ENCODE measurements at regions of chr6 and their contacts with region 1.

Region 1: DNA sequence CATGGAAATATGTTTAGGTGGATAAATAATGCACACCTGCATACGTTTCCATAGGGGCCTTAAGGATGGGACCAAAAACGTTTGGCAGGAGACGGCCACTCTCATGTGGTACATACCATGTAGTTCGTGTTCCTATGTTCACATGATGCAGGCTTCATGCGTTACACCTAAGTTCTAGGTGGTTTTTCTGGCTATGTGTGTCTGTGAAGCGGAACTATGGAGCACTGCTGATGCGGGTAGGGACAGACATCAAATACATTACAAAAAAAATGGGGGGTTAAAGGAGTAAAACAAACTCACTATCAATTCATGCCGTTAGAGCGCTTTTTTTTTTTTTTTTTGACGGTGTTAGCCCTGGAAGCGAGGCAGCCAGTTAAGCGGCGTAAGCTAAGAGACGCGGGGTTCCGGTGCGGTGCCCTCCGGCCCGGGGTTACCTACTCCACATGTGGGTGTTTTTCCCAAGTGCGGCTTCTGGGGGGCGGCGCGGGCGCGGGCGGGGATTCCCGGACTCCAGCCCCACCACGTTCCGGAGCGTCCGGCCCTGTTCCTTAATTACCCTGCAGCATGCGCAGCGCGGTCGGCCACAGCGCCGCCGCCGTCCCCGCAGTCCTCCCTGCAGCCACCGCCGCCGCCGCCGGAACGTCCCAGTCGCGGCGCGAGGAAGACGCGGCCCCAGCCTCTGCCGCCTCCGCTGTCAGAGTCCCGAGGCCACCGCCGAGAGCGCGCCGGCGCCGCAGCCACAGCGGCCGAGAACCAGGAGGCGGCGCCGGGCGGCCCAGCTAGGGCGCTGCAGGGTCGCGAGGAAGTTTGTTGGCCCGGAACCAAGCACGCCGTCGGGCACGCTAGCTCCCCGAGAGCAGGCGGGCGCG is 648 bp downstream of the COL19A1 start:
- DNase-seq: peak; percentile 81
- ATAC-seq: peak; percentile 74
- H3K4me3 Mint-ChIP-seq: peak overlapping the region; percentile 88
- H3K27ac Mint-ChIP-seq: peak overlapping the region; percentile 98
- H3K4me1 Mint-ChIP-seq: peaks cover 74% of the 10 kb centered on the region
- H3K27me3 Mint-ChIP-seq: no peaks in the 10 kb centered on the region
- CTCF ChIP-seq: no peak

Region 2: DNA sequence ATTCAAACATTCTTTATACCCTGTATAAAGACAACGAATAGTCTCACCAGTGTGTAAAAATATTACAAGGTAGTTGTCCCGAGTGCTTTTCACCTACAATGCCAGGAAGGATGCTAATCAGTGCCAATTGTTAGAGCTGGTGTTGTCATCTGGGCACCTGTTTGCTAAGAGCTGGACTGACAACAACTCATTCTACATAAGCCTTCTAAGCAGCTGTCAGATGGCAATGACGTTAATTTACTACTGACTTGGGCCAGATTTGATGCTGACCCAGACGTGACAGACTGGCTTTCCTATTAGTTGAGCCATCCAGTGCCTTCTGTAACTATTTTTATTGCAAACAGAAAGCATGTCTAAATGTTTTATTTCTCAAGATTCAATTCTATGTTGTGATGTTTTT is 876.7 kb before region 1 on chr6:
- CTCF ChIA-PET with region 1: no interaction called
- POLR2A ChIA-PET with region 1: no interaction called
- intact Hi-C with region 1: no loop called
- DNase-seq: no peak
- ATAC-seq: no peak
- H3K4me3 Mint-ChIP-seq: no peak overlapping the region
- H3K27ac Mint-ChIP-seq: no peak overlapping the region
- H3K4me1 Mint-ChIP-seq: no peaks in the 10 kb centered on the region
- H3K27me3 Mint-ChIP-seq: no peaks in the 10 kb centered on the region
- CTCF ChIP-seq: no peak

Region 3: DNA sequence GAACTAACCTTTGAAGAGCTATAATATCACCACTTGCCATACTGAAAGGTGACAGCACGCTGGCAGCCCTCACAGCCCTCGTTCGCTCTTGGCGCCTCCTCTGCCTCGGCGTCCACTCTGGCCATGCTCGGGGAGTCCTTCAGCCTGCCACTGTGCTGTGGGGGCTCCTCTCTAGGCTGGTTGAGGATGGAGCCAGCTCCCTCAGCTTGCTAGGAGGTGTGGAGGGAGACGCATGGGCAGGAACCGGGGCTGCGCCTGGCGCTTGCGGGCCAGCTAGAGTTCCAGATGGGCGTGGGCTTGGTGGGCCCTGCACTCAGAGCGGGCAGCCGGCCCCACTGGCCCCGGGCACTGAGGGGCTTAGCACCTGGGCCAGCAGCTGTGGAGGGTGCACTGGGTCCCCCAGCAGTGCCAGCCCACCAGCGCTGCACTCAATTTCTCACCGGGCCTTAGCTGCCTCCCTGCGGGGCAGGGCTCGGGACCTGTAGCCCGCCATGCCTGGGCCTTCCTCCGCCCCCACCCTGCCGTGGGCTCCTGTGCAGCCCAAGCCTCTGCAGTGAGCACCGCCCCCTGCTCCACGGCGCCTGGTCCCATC is 399.9 kb before region 1 on chr6:
- CTCF ChIA-PET with region 1: no interaction called
- POLR2A ChIA-PET with region 1: no interaction called
- intact Hi-C with region 1: no loop called
- DNase-seq: no peak
- ATAC-seq: no peak
- H3K4me3 Mint-ChIP-seq: no peak overlapping the region
- H3K27ac Mint-ChIP-seq: no peak overlapping the region
- H3K4me1 Mint-ChIP-seq: no peaks in the 10 kb centered on the region
- H3K27me3 Mint-ChIP-seq: no peaks in the 10 kb centered on the region
- CTCF ChIP-seq: no peak

Region 4: GRCh38 chr6:69796642-69797390 is 70.2 kb before region 1 on chr6 and contains the start of gene LMBRD1:
- CTCF ChIA-PET with region 1: interaction called, 9 read pairs
- POLR2A ChIA-PET with region 1: interaction called, 82 read pairs
- intact Hi-C with region 1: loop called (anchors 1 kb)
- DNase-seq: peak; percentile 100
- ATAC-seq: peak; percentile 81
- H3K4me3 Mint-ChIP-seq: peak within 1 kb of the TSS; percentile 95
- H3K27ac Mint-ChIP-seq: peak within 1 kb of the TSS; percentile 97
- H3K4me1 Mint-ChIP-seq: peaks cover 47% of the 10 kb centered on the region
- H3K27me3 Mint-ChIP-seq: no peaks in the 10 kb centered on the region
- CTCF ChIP-seq: peak; percentile 53
- total RNA-seq, gene LMBRD1: 46.9 and 51.3 TPM in 2 replicates

Region 5: DNA sequence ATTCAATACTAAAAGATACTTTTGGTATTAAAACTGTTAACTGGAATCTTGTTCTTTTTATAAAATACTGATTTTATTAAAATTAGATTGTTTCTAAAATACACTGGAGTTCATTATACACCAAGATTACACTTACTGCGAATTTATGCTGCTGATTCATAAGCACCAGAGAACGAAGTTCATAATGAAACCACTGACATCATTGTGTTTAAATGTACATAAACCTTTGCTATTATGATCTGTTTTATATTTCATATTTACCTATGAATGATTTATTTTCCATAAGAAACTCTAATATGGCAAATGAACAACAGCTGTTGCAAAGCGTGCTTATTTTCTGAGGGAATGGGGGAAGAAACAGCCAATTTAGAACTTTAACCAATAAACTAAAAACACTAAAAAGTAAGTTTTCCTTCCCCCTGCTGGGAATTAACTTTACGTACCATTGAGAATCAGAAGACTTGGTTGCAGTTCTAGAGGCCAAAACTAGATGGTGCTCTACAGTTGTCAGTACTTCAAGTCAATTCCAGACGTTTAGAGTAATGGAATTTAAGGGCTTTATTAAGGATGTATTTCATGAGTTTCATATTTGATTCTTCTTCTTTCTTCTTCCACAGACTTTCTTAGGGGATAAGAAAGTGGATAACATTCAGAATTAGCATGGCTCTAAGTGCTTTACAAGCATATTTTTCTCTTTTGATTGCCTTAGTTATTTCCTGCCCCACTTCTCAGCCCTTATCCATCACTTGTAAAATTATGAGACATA is 31.4 kb before region 1 on chr6:
- CTCF ChIA-PET with region 1: interaction called, 13 read pairs
- POLR2A ChIA-PET with region 1: interaction called, 4 read pairs
- intact Hi-C with region 1: loop called (anchors 1 kb)
- DNase-seq: no peak
- ATAC-seq: peak; percentile 88
- H3K4me3 Mint-ChIP-seq: no peak overlapping the region
- H3K27ac Mint-ChIP-seq: peak overlapping the region; percentile 57
- H3K4me1 Mint-ChIP-seq: peaks cover 20% of the 10 kb centered on the region
- H3K27me3 Mint-ChIP-seq: no peaks in the 10 kb centered on the region
- CTCF ChIP-seq: peak; percentile 81

Region 6: DNA sequence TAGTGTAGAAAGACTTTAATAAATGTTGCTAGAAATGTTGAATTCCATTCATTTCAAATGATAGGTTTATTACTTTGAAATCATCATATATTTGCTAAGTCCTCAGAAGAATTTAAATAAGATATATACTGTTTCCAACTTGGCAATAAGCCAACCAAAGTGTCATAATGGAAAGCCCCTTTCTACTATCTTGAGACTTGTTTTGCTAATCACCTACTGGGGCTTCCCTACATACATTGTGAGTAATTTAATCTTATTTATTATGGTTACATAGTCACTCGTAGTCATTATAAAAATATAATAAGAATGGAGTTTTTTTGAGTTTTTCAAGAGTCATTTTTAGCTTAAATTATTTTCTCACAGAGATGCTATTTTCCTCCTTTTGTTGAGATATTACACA is 20.0 kb after region 1 on chr6:
- CTCF ChIA-PET with region 1: interaction called, 24 read pairs
- POLR2A ChIA-PET with region 1: interaction called, 141 read pairs
- intact Hi-C with region 1: no loop called
- DNase-seq: no peak
- ATAC-seq: peak; percentile 77
- H3K4me3 Mint-ChIP-seq: peak overlapping the region; percentile 63
- H3K27ac Mint-ChIP-seq: peak overlapping the region; percentile 96
- H3K4me1 Mint-ChIP-seq: peaks cover 84% of the 10 kb centered on the region
- H3K27me3 Mint-ChIP-seq: no peaks in the 10 kb centered on the region
- CTCF ChIP-seq: no peak

Region 7: DNA sequence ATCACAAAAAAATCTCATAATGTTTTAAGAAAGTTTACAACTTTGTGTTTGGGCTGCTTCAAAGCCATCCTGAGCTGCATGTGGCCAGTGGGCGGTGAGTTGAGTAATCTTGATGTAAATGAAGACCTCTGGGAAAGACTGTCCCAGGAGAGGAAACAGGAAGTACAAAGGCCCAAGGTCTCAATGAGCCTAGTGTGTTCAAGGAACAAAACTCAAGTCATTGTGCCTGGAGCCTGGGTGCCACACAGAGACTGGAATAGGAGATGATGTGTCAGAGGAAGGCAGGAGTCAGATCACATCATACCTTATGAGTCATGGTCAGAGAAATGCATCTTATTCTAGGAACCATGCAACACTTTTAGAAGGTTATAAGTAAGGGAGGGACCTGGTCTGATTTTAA is 50.8 kb after region 1 on chr6:
- CTCF ChIA-PET with region 1: interaction called, 4 read pairs
- POLR2A ChIA-PET with region 1: interaction called, 7 read pairs
- intact Hi-C with region 1: loop called (anchors 2 kb)
- DNase-seq: no peak
- ATAC-seq: peak; percentile 84
- H3K4me3 Mint-ChIP-seq: peak overlapping the region; percentile 36
- H3K27ac Mint-ChIP-seq: peak overlapping the region; percentile 54
- H3K4me1 Mint-ChIP-seq: peaks cover 48% of the 10 kb centered on the region
- H3K27me3 Mint-ChIP-seq: no peaks in the 10 kb centered on the region
- CTCF ChIP-seq: no peak

Region 8: DNA sequence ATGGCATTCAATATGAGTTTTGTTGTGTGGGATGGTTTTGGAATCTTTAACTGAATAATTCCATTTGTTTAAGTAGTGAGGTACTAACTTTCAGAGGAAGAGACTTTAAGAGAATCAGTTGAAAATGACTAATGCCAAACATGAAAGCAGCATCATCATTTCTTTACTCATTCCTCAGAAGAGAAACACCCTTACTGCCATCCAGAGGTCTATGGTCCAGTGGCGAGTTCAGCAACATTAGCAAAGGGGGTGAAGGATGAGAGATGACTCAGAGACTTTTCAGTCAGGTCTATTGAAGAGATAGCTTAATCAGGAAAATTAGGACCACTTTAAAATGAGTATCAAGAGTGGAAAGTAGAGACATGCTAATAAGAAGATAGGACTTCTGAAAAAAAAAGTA is 118.2 kb after region 1 on chr6:
- CTCF ChIA-PET with region 1: no interaction called
- POLR2A ChIA-PET with region 1: interaction called, 7 read pairs
- intact Hi-C with region 1: loop called (anchors 2 kb)
- DNase-seq: no peak
- ATAC-seq: peak; percentile 42
- H3K4me3 Mint-ChIP-seq: no peak overlapping the region
- H3K27ac Mint-ChIP-seq: peak overlapping the region; percentile 46
- H3K4me1 Mint-ChIP-seq: peaks cover 36% of the 10 kb centered on the region
- H3K27me3 Mint-ChIP-seq: no peaks in the 10 kb centered on the region
- CTCF ChIP-seq: no peak

Region 9: GRCh38 chr6:71288228-71289001 is 1421.4 kb after region 1 on chr6 and contains the start of gene OGFRL1:
- CTCF ChIA-PET with region 1: no interaction called
- POLR2A ChIA-PET with region 1: interaction called, 5 read pairs
- intact Hi-C with region 1: loop called (anchors 5 kb)
- DNase-seq: peak; percentile 80
- ATAC-seq: peak; percentile 81
- H3K4me3 Mint-ChIP-seq: peak within 1 kb of the TSS; percentile 85
- H3K27ac Mint-ChIP-seq: peak within 1 kb of the TSS; percentile 93
- H3K4me1 Mint-ChIP-seq: peaks cover 49% of the 10 kb centered on the region
- H3K27me3 Mint-ChIP-seq: no peaks in the 10 kb centered on the region
- CTCF ChIP-seq: no peak
- total RNA-seq, gene OGFRL1: 17.1 and 18.4 TPM in 2 replicates

Measured in activated B cell treated with CpG ODN at 0.5 μM for 24 hours (primary cell).